Mammary epithelial cell (primary cell): ENCODE measurements at regions of chr10 and their contacts with region 1.

Region 1: GRCh38 chr10:103888113-103888841 is 29.7 kb downstream of the STN1 start:
- DNase-seq: peak; percentile 79
- H3K4me3 ChIP-seq: no peak overlapping the region
- H3K27ac ChIP-seq: peak overlapping the region; percentile 68
- H3K4me1 ChIP-seq: peaks cover 59% of the 10 kb centered on the region
- H3K27me3 ChIP-seq: no peaks in the 10 kb centered on the region
- CTCF ChIP-seq: peak; percentile 78 to 94

Region 2: GRCh38 chr10:102988404-102989314 is 899.6 kb before region 1 on chr10:
- CTCF ChIA-PET with region 1: no interaction called
- dilution Hi-C with region 1: no loop called
- in situ Hi-C with region 1: no loop called
- intact Hi-C with region 1: no loop called
- DNase-seq: no peak
- H3K4me3 ChIP-seq: no peak overlapping the region
- H3K27ac ChIP-seq: no peak overlapping the region
- H3K4me1 ChIP-seq: no peaks in the 10 kb centered on the region
- H3K27me3 ChIP-seq: no peaks in the 10 kb centered on the region
- CTCF ChIP-seq: no peak

Region 3: DNA sequence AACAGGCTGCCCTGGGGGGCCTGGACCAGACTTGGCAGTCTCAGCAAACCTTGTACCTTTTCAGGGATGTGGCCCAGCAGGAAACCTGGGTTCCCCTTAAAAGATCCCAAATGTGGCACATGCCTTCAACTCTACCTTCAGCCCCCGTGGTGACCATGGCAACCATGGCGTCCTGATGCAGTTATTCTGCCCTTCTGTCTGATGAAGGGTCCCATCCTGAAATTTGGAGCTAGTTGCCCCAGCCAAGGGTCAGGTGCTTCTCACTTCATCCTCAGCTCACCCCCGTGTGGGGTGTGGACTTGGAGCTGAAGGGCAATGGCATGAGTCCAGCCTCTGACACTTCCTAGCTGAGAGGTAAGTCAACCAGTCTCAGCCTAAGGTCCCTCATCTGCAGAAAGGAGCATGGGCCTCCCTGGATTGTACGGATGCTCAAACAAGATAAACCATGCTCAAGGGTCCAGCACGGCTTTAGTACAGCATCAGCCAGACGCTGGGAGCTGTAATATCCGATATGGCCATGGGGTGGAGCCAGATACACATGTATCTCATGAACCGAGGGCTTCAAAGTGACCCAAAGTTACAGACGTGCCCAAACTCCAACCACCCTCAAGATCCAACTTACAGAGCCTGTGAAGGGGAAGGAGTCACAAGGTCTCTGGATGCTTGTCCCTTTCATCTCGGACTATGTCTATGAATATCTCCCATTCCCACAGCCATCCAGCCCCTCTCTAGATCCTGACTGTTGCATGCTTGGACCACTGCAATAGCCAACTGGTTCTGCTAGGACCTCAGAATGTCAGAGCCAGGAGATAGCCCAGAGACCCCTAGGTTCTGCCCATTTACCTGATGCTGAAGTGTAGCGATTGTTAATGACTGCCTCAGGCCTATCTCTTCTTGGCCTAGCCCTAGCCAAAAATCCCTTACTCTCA is 175.4 kb before region 1 on chr10:
- CTCF ChIA-PET with region 1: no interaction called
- dilution Hi-C with region 1: no loop called
- in situ Hi-C with region 1: loop called in 1 of 2 experiments (anchors 5 kb)
- intact Hi-C with region 1: loop called (anchors 1 kb)
- DNase-seq: peak; percentile 74
- H3K4me3 ChIP-seq: no peak overlapping the region
- H3K27ac ChIP-seq: peak overlapping the region; percentile 76
- H3K4me1 ChIP-seq: peaks cover 85% of the 10 kb centered on the region
- H3K27me3 ChIP-seq: no peaks in the 10 kb centered on the region
- CTCF ChIP-seq: peak; percentile 72 to 89

Region 4: DNA sequence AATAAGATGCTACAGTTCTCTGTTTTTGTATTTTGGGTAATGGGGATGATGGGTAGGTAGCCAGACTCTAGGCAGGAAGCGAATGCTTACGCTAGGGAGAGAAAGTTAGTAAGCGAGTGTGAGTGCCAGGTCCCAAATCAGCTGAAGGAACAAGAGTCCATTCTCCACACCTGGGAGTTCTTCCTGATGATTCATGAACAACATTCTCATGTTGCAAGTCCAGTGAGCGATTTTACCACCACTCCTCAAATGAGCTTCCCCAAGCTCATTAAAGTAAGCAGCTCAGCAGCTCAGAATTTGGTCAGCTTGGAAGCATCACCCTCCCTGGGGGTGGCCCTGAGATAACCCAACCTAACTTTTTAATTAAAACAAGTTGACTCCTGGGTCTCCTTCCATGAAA is 60.2 kb before region 1 on chr10:
- CTCF ChIA-PET with region 1: no interaction called
- dilution Hi-C with region 1: no loop called
- in situ Hi-C with region 1: no loop called
- intact Hi-C with region 1: loop called (anchors 1 kb)
- DNase-seq: peak; percentile 96
- H3K4me3 ChIP-seq: no peak overlapping the region
- H3K27ac ChIP-seq: peak overlapping the region; percentile 65
- H3K4me1 ChIP-seq: peaks cover 80% of the 10 kb centered on the region
- H3K27me3 ChIP-seq: no peaks in the 10 kb centered on the region
- CTCF ChIP-seq: no peak

Region 5: DNA sequence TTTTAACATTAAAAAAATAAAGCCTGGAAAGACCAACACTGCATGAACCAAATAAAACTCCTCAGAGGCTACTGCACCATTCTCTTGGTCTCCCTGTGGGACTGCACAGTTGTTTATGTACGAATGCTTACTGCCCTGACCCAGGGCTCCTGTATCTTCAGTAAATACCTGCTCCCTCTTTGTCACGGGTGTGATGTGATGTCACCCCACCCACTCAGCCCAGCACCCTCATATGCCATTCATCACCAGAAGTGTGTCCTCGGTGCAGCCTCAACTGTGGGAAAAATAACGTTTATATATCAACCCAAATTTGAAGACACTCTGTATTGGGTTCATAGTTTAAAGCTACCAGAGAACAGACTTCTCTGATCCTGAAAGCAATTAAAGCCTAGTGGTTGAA is 18.9 kb before region 1 on chr10:
- CTCF ChIA-PET with region 1: no interaction called
- dilution Hi-C with region 1: no loop called
- in situ Hi-C with region 1: no loop called
- intact Hi-C with region 1: no loop called
- DNase-seq: no peak
- H3K4me3 ChIP-seq: no peak overlapping the region
- H3K27ac ChIP-seq: peak overlapping the region; percentile 99
- H3K4me1 ChIP-seq: peaks cover 45% of the 10 kb centered on the region
- H3K27me3 ChIP-seq: no peaks in the 10 kb centered on the region
- CTCF ChIP-seq: no peak

Region 6: DNA sequence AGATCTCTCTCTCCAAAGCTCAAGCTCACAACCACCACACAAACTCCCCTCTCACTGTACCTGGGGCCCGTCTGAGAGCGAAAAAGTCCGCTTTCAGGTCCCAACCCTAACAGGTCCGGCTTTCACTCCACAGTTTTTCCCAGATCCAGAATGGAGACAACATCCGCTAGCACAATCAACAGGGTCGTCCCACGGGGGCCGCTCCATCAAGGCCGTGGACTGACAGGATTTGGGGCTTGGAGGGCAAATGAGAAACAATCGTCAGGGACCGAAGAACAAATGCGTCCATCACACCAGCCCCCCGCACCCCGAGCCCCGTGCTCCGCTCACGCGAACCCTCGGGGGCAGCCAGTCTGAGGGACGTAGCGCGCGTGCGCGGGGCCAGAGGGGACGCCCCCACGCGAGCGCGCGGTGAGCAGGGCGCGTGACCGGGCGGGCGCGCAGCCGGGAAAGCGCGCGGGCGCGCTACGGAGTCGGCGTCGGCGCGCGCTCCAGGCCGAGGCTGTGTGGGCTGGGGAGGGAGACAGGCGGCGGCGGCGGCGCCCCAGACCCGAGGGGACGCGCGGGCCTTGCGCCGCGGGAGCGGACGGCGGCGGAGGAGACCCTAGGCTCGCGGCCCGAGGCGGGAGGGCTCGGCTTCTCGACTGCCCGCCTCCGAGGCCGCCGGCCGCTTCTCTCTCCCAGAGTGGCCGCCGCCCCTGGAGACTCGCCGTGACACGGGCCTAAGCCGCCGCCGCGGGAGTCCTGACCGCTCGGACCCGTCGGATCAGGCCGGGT is 78.6 kb after region 1 on chr10 and contains the start of gene SLK:
- CTCF ChIA-PET with region 1: no interaction called
- dilution Hi-C with region 1: no loop called
- in situ Hi-C with region 1: loop called (anchors 5 kb)
- intact Hi-C with region 1: loop called (anchors 1 kb)
- DNase-seq: peak; percentile 80
- H3K4me3 ChIP-seq: peak within 1 kb of the TSS; percentile 69 to 99 (median 97)
- H3K27ac ChIP-seq: peak within 1 kb of the TSS; percentile 72
- H3K4me1 ChIP-seq: peaks cover 13% of the 10 kb centered on the region
- H3K27me3 ChIP-seq: no peaks in the 10 kb centered on the region
- CTCF ChIP-seq: no peak
- total RNA-seq, gene SLK: 79.5 to 85.0 TPM

Region 7: DNA sequence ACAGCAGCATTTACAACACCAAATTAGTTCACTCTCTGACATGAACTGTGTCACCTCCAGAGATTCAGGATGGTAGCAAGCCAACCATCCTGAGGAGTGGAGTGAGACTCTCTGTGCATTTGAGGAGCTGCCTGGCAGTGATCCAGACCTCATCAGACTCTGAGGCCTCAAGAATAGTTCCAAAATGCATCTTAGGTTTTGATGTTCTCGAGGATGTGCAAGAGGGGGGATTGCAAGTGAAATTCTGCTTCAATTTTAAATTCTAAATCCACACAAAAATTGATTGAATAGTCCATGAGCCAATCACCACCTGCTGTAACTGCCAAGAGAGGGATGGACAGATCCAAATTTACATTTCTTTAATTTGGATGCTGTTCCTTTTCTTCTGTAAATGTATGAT is 128.4 kb after region 1 on chr10:
- CTCF ChIA-PET with region 1: interaction called, 4 read pairs
- dilution Hi-C with region 1: no loop called
- in situ Hi-C with region 1: no loop called
- intact Hi-C with region 1: loop called (anchors 2 kb)
- DNase-seq: no peak
- H3K4me3 ChIP-seq: no peak overlapping the region
- H3K27ac ChIP-seq: no peak overlapping the region
- H3K4me1 ChIP-seq: no peaks in the 10 kb centered on the region
- H3K27me3 ChIP-seq: no peaks in the 10 kb centered on the region
- CTCF ChIP-seq: no peak

Region 8: DNA sequence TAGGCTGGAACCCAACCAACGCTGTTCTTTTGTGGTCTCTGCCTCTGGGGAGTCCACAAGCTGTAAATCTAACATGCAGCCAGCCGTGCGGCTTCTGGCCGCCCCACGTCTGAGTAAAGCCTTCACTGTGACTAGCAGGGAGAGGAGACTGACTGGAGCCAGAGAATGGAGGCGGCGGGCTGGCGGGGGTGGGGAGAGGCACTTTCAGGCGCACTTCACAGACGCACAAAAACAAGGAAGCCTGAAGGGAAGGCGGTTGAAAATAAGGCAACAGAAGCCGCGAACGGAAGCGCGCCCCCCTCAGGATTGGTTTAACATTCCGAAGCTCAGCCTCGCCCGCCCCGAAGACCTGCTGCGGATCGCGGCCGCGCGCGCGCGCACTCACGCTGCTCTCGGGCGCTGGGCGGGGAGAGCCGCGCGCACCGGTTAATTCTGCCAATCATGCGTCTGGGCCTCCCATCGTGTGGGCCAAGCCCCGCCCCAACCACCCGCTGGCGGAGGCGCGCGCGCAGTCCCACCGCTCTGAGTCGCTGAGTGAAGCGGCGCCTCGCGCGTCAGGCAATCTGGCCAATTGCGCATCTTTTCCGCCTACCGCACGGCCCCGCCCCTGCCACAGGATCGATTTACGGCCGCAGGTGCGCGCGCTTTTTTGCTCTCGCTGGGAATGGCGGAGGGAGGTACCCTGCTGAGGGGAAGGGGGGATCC is 233.4 kb after region 1 on chr10 and contains the start of gene SFR1:
- CTCF ChIA-PET with region 1: no interaction called
- dilution Hi-C with region 1: no loop called
- in situ Hi-C with region 1: no loop called
- intact Hi-C with region 1: loop called (anchors 1 kb)
- DNase-seq: peak; percentile 99
- H3K4me3 ChIP-seq: peak within 1 kb of the TSS; percentile 73 to 78 (median 78)
- H3K27ac ChIP-seq: peak within 1 kb of the TSS; percentile 100
- H3K4me1 ChIP-seq: peaks cover 39% of the 10 kb centered on the region
- H3K27me3 ChIP-seq: no peaks in the 10 kb centered on the region
- CTCF ChIP-seq: peak; percentile 42 to 65
- total RNA-seq, gene SFR1: 5.8 to 16.4 TPM